Sciatic nerve (tissue), 2 donors: ENCODE measurements at regions of chr4 and their contacts with region 1.

Region 1: DNA sequence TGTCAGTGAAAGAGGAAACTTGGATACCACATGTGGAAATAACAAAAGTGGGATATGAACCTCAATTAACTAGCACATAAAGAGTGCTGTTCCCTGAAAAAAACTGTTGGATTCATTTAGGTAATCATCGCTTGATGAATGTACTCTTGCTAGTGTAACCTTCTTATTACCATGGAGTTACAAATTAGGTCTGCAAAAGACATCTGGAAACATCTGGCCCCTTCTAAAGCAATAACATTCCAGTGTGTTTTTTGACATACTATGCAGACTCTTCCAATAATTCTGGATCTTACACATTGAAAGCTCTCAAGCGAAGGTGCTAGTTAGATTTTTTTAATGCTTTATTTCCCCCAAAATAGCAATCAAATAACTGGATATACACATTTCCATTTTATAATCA is 134.6 kb downstream of the ATP10D start:
- DNase-seq: no peak
- ATAC-seq: no peak

Region 2: GRCh38 chr4:47451657-47452056 is 168.0 kb before region 1 on chr4:
- intact Hi-C with region 1: no loop called
- DNase-seq: no peak
- ATAC-seq: no peak

Region 3: GRCh38 chr4:47659342-47659741 is 39.7 kb after region 1 on chr4:
- intact Hi-C with region 1: loop called (anchors 1 kb)
- DNase-seq: no peak
- ATAC-seq: no peak